Activated CD4-positive, alpha-beta T cell treated with anti-CD3 and anti-CD28 coated beads for 36 hours (primary cell): ENCODE measurements at regions of chr19 and their contacts with region 1.

Region 1: GRCh38 chr19:52786457-52787359 is at the start of gene ZNF600:
- DNase-seq: peak; percentile 83
- ATAC-seq: peak; percentile 99
- H3K4me3 Mint-ChIP-seq: peak within 1 kb of the TSS; percentile 87
- H3K27ac Mint-ChIP-seq: peak within 1 kb of the TSS; percentile 84
- H3K4me1 Mint-ChIP-seq: peaks cover 23% of the 10 kb centered on the region
- H3K27me3 Mint-ChIP-seq: no peaks in the 10 kb centered on the region
- total RNA-seq, gene ZNF600: 10.6 to 14.3 TPM

Region 2: GRCh38 chr19:52761696-52762095 is 25.0 kb before region 1 on chr19:
- CTCF ChIA-PET with region 1: no interaction called
- POLR2A ChIA-PET with region 1: no interaction called
- intact Hi-C with region 1: loop called in 1 of 2 experiments (anchors 2 kb)
- DNase-seq: no peak
- ATAC-seq: no peak
- H3K4me3 Mint-ChIP-seq: no peak overlapping the region
- H3K27ac Mint-ChIP-seq: no peak overlapping the region
- H3K4me1 Mint-ChIP-seq: no peaks in the 10 kb centered on the region
- H3K27me3 Mint-ChIP-seq: no peaks in the 10 kb centered on the region

Region 3: GRCh38 chr19:52823676-52824075 is 37.0 kb after region 1 on chr19:
- CTCF ChIA-PET with region 1: no interaction called
- POLR2A ChIA-PET with region 1: no interaction called
- intact Hi-C with region 1: loop called in 1 of 2 experiments (anchors 2 kb)
- DNase-seq: no peak
- ATAC-seq: no peak
- H3K4me3 Mint-ChIP-seq: no peak overlapping the region
- H3K27ac Mint-ChIP-seq: no peak overlapping the region
- H3K4me1 Mint-ChIP-seq: peaks cover 9% of the 10 kb centered on the region
- H3K27me3 Mint-ChIP-seq: no peaks in the 10 kb centered on the region